Endothelial cell of umbilical vein (primary cell): ENCODE measurements at regions of chr5 and their contacts with region 1.

Region 1: GRCh38 chr5:151686674-151687407 is at the start of gene SPARC:
- DNase-seq: peak; percentile 85
- H3K4me3 ChIP-seq: peak within 1 kb of the TSS; percentile 73 to 98 (median 89)
- H3K27ac ChIP-seq: peak within 1 kb of the TSS; percentile 84
- H3K4me1 ChIP-seq: peaks cover 38% of the 10 kb centered on the region
- H3K27me3 ChIP-seq: no peaks in the 10 kb centered on the region
- CTCF ChIP-seq: no peak
- POLR2A ChIP-seq: peak; percentile 100
- total RNA-seq, gene SPARC: 3,114 and 3,174 TPM in 2 replicates

Region 2: DNA sequence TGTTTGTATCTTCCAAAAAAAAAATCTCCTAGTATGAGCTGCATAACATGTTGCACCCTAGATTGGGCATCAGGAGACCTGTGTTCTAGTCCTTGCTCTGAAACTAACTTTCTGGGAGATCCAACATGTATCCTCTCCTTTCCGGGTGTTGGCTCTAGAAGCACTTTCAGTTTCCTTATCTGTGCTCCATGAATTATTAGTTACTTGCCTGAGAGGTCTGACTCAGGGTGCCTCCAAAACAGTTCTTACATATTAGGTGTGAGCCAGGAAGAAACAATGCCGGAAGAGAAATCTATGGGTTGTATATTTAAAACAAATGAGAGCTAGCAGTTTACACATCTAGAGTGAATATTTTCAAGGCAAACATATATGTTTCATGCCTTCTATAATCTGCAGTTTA is 302.7 kb before region 1 on chr5:
- CTCF ChIA-PET with region 1: no interaction called
- POLR2A ChIA-PET with region 1: no interaction called
- dilution Hi-C with region 1: no loop called
- intact Hi-C with region 1: no loop called
- DNase-seq: no peak
- H3K4me3 ChIP-seq: no peak overlapping the region
- H3K27ac ChIP-seq: no peak overlapping the region
- H3K4me1 ChIP-seq: no peaks in the 10 kb centered on the region
- H3K27me3 ChIP-seq: no peaks in the 10 kb centered on the region
- CTCF ChIP-seq: no peak
- POLR2A ChIP-seq: no peak

Region 3: DNA sequence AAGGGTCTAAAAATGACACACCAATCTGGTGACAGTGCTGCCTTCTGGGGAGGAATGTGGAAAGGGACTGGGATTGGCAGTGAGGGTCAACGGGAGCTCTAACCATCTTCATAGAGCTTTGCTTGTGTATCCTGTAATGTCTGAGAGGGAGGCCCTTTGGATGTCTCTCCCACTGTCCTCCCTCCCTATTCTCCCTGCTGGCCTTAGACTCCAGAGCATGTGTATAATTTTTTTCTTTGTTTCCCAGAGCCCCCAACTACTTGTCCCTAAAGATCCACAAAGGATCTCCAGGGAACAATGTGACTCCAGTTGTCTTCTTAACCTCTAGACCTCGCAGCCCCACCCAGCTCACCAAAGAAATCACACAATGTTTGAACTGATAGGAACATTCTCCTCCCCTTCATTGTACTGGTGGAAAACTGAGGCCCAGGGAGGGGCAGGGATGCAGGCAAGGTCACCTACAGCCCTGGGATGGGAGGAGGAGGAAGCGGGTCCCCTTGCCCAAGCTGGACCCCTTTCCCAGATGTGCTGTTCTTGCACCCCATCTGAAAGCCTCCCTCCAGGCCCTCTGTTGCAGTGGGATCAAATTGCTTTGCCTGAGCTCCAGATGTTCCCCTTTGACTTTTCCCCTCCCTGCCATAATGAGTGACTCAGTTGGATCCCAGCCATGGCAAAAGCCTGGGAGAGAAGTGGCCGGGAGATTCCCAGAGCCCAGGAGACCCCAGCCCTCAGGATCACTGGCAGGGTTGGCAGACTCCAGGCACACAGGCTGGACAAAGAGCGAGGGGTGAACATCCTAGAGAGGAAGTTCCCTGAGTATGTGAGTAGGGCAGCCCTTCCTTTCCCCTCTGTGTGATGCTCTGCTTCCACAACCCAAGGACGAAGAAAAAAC is 21.9 kb before region 1 on chr5:
- CTCF ChIA-PET with region 1: interaction called, 59 read pairs
- POLR2A ChIA-PET with region 1: interaction called, 39 read pairs
- dilution Hi-C with region 1: no loop called
- intact Hi-C with region 1: loop called (anchors 1 kb)
- DNase-seq: peak; percentile 94
- H3K4me3 ChIP-seq: no peak overlapping the region
- H3K27ac ChIP-seq: peak overlapping the region; percentile 92
- H3K4me1 ChIP-seq: peaks cover 46% of the 10 kb centered on the region
- H3K27me3 ChIP-seq: no peaks in the 10 kb centered on the region
- CTCF ChIP-seq: no peak
- POLR2A ChIP-seq: no peak

Region 4: DNA sequence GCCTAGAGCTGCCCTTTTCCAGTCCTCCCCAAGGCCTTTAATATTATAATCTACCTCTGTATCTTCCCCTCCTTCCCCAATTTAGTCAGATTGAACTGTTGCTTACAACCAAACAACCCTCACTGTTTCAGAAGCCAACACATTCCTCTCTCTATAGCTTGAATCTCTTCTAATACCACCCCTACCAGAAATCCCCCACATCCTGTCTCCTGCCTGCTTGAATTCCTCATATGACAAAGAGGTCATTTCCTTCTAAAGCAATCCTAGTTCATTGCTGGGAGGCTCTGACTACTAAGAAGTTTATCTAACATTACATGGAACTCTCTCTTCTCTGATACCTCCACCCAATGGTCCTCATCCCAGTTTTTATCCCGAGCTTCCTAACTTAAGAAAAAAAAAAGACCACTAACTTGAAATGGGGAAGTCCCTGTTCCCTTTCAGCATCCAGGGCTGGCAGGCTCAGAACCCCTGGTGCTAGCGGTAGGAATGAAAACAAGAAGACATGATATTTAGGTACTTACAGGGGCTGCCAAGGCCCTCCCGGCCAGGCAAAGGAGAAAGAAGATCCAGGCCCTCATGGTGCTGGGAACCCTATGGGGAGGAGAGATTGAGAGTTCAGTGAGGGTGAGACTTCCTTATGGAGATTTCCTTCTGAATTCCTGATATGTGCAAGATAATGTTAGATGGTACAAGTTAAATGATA is 11.1 kb before region 1 on chr5:
- CTCF ChIA-PET with region 1: interaction called, 59 read pairs
- POLR2A ChIA-PET with region 1: interaction called, 39 read pairs
- dilution Hi-C with region 1: no loop called
- intact Hi-C with region 1: loop called (anchors 1 kb)
- DNase-seq: peak; percentile 87
- H3K4me3 ChIP-seq: peak overlapping the region in 1 of 3 experiments; percentile 16
- H3K27ac ChIP-seq: peak overlapping the region; percentile 99
- H3K4me1 ChIP-seq: peaks cover 98% of the 10 kb centered on the region
- H3K27me3 ChIP-seq: no peaks in the 10 kb centered on the region
- CTCF ChIP-seq: no peak
- POLR2A ChIP-seq: no peak

Region 5: GRCh38 chr5:151699071-151699901 is 12.4 kb after region 1 on chr5:
- CTCF ChIA-PET with region 1: interaction called, 13 read pairs
- POLR2A ChIA-PET with region 1: interaction called, 76 read pairs
- dilution Hi-C with region 1: no loop called
- intact Hi-C with region 1: loop called (anchors 1 kb)
- DNase-seq: peak; percentile 94
- H3K4me3 ChIP-seq: no peak overlapping the region
- H3K27ac ChIP-seq: peak overlapping the region; percentile 93
- H3K4me1 ChIP-seq: peaks cover 12% of the 10 kb centered on the region
- H3K27me3 ChIP-seq: no peaks in the 10 kb centered on the region
- CTCF ChIP-seq: no peak
- POLR2A ChIP-seq: peak; percentile 62

Region 6: DNA sequence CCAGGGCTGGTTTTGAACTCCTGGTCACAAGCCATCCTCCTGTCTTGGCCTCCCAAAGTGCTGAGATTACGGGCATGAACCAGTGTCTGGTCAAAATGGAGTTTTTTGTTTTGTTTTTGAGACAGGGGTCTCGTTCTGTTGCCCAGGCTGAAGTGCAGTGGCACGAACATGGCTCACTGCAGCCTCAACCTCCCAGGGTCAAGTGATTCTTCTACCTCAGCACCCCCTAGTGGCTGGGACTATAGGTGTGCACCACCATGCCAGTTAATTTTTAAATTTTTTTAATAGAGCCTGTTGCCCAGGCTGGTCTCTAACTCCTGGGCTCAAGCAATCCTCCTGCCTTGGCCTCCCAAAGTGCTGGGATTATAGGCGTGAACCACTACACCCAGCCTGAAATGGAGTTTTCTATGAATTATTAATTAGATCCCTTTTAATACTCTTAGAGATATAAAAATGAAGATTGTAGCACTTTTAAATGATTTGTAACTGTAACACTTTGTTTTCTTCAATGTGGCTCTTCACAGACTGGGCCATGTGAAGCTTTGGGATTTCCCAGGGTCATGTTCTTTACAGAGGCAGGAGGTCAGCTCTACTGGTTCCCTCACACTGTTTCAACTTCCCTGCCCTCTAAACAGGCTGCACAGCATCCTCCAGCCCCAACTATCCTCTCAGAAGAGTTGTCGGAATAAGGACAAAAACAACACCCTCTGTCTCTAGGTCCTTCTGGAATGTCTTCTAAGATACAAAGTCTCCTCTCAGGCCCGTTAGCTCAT is 32.6 kb after region 1 on chr5:
- CTCF ChIA-PET with region 1: interaction called, 8 read pairs
- POLR2A ChIA-PET with region 1: interaction called, 3 read pairs
- dilution Hi-C with region 1: no loop called
- intact Hi-C with region 1: loop called (anchors 1 kb)
- DNase-seq: peak; percentile 60
- H3K4me3 ChIP-seq: no peak overlapping the region
- H3K27ac ChIP-seq: no peak overlapping the region
- H3K4me1 ChIP-seq: no peaks in the 10 kb centered on the region
- H3K27me3 ChIP-seq: no peaks in the 10 kb centered on the region
- CTCF ChIP-seq: peak; percentile 52 to 67
- POLR2A ChIP-seq: no peak